ENCODE measurements at regions of chr2 and their contacts with region 1.

Region 1: GRCh38 chr2:98731041-98731893 is at the start of gene MGAT4A:
- DNase-seq: peak; percentile 76
- ATAC-seq: peak; percentile 87
- H3K4me3 Mint-ChIP-seq: peak within 1 kb of the TSS; percentile 83
- H3K27ac Mint-ChIP-seq: peak within 1 kb of the TSS; percentile 84
- H3K4me1 Mint-ChIP-seq: peaks cover 56% of the 10 kb centered on the region
- H3K27me3 Mint-ChIP-seq: no peaks in the 10 kb centered on the region
- CTCF ChIP-seq: no peak
- total RNA-seq, gene MGAT4A: 12.6 and 15.7 TPM in 2 replicates

Region 2: GRCh38 chr2:98649135-98649991 is 81.9 kb before region 1 on chr2:
- CTCF ChIA-PET with region 1: interaction called, 10 read pairs
- POLR2A ChIA-PET with region 1: no interaction called
- intact Hi-C with region 1: loop called (anchors 1 kb)
- DNase-seq: peak; percentile 46
- ATAC-seq: peak; percentile 99
- H3K4me3 Mint-ChIP-seq: no peak overlapping the region
- H3K27ac Mint-ChIP-seq: peak overlapping the region; percentile 18
- H3K4me1 Mint-ChIP-seq: peaks cover 19% of the 10 kb centered on the region
- H3K27me3 Mint-ChIP-seq: no peaks in the 10 kb centered on the region
- CTCF ChIP-seq: peak; percentile 99

Region 3: GRCh38 chr2:98702127-98702802 is 29.0 kb before region 1 on chr2:
- CTCF ChIA-PET with region 1: no interaction called
- POLR2A ChIA-PET with region 1: no interaction called
- intact Hi-C with region 1: no loop called
- DNase-seq: no peak
- ATAC-seq: no peak
- H3K4me3 Mint-ChIP-seq: no peak overlapping the region
- H3K27ac Mint-ChIP-seq: no peak overlapping the region
- H3K4me1 Mint-ChIP-seq: peaks cover 13% of the 10 kb centered on the region
- H3K27me3 Mint-ChIP-seq: no peaks in the 10 kb centered on the region
- CTCF ChIP-seq: no peak

Region 4: DNA sequence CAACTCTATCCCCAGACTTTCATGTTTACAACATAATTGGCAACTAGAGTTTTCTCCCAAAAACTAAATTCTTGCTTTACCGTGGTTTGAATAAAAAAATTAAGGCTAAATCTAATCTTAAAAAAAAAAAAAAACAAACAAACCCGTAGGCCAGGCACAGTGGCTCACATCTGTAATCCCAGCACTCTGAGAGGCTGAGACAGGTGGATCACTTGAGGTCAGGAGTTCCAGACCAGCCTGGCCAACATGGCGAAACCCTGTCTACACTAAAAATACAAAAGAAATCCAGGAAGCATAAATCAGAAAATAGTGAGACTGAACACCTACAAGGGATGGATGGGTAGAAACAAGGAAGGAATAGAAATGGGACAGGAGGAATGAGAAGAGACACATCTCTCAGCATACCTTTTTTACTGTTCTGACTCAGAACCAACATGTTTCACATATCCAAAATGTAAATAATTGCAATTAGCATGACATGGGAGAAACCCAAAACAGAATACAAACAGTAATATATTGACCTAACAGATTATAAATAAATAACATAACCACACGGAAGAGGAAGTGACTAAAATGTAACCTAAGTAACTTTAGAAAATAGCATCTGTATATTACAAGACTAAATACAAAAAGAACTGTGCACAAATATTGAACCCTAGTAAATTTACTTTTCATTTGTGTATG is 17.8 kb before region 1 on chr2:
- CTCF ChIA-PET with region 1: no interaction called
- POLR2A ChIA-PET with region 1: interaction called, 8 read pairs
- intact Hi-C with region 1: loop called (anchors 2 kb)
- DNase-seq: no peak
- ATAC-seq: peak; percentile 55
- H3K4me3 Mint-ChIP-seq: peak overlapping the region; percentile 54
- H3K27ac Mint-ChIP-seq: peak overlapping the region; percentile 78
- H3K4me1 Mint-ChIP-seq: peaks cover 76% of the 10 kb centered on the region
- H3K27me3 Mint-ChIP-seq: no peaks in the 10 kb centered on the region
- CTCF ChIP-seq: no peak

Region 5: DNA sequence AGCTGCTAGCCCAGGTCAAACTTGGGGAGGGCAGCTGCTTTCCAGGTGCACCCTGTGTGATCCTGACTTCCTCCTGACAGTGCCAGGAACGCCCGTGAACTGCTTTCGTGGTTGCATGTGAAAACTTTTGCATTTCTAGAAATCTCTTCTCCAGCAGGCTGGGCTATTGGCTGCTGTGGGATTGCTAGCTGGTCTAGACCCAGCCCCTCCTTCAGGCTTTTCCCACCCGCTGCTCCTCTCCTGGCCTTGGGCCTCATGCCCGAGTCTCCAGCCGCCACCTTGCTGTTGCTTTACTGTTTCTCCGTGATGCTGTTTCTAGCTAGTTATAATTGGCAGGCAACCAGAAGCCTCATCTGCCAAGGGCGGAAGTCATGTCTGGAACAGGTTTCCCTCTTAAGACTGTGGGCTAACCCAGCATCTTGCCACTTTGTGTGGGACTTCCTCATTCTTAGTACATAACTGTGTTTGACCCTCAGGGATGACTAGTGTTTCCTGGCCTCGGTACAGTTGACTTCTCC is 26.7 kb after region 1 on chr2:
- CTCF ChIA-PET with region 1: interaction called, 4 read pairs
- POLR2A ChIA-PET with region 1: interaction called, 15 read pairs
- intact Hi-C with region 1: loop called (anchors 2 kb)
- DNase-seq: no peak
- ATAC-seq: peak; percentile 93
- H3K4me3 Mint-ChIP-seq: peak overlapping the region; percentile 64
- H3K27ac Mint-ChIP-seq: peak overlapping the region; percentile 67
- H3K4me1 Mint-ChIP-seq: peaks cover 62% of the 10 kb centered on the region
- H3K27me3 Mint-ChIP-seq: no peaks in the 10 kb centered on the region
- CTCF ChIP-seq: no peak

Region 6: DNA sequence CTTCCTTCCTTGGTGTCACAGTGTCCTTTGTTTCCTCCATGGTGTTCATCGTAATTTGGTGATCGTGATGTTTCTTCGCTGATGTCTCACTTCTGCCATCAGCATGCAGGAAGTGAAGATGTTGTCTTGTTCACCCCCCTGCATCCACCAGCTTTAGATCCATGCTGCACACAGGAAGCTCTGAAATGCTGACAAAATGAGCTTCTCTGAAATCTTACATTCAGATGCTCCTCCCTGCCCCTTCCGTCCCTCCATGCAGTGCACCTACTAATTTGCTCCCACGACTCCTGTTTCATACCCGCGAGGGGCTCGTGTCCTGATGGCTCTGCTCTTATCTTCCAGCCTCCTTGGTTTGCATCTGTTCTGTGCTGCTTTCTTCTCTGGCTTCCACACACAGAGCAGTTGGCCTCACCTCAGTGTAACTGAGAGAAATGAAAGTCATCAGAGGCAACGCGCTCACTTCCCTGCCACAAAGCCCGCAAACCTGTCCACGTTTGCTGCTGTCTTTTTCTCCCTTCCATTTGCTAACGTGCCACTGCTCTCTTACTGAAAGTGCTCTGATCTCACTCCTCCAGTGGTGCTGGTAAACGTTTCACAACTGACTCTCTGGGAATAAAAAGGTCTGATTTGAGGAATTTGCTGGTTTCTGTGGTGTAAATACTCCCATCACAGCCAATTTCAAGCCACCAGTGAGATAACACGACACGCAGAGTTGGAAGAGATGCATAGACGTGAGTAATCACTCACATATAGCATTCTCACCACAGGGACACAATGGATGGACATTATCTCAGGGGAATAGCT is 40.7 kb after region 1 on chr2:
- CTCF ChIA-PET with region 1: no interaction called
- POLR2A ChIA-PET with region 1: interaction called, 11 read pairs
- intact Hi-C with region 1: no loop called
- DNase-seq: no peak
- ATAC-seq: peak; percentile 58
- H3K4me3 Mint-ChIP-seq: peak overlapping the region; percentile 81
- H3K27ac Mint-ChIP-seq: peak overlapping the region; percentile 80
- H3K4me1 Mint-ChIP-seq: peaks cover 39% of the 10 kb centered on the region
- H3K27me3 Mint-ChIP-seq: peaks cover 3% of the 10 kb centered on the region
- CTCF ChIP-seq: no peak

Region 7: GRCh38 chr2:98822301-98823164 is 91.3 kb after region 1 on chr2:
- CTCF ChIA-PET with region 1: interaction called, 5 read pairs
- POLR2A ChIA-PET with region 1: interaction called, 3 read pairs
- intact Hi-C with region 1: loop called (anchors 1 kb)
- DNase-seq: peak; percentile 41
- ATAC-seq: peak; percentile 80
- H3K4me3 Mint-ChIP-seq: peak overlapping the region; percentile 57
- H3K27ac Mint-ChIP-seq: no peak overlapping the region
- H3K4me1 Mint-ChIP-seq: peaks cover 16% of the 10 kb centered on the region
- H3K27me3 Mint-ChIP-seq: peaks cover 5% of the 10 kb centered on the region
- CTCF ChIP-seq: no peak

Region 8: DNA sequence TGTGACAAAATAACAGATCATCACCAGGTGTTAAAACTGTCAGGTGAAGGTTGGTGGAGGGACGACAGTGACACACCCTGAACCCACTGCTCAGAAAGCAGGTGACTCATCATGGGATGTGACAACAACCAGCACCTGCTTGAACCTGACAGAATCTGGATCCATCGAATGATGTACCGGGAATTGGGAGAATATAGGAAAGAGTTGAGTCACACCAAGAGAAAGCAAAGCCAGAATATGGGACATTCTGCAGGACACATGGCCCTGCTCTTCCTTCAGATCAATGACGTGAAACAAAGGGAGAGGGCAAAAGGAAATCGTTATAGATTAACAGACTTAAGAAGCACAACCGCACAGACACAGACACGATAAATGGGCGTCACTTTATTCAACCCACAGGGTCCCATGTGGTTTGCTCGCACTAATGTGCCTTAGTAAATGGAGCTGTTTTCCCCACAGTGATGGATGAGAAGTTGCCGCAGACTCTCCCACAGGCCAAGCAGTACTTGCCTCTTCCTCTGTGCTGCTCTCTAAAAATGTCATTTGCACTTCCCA is 104.6 kb after region 1 on chr2:
- CTCF ChIA-PET with region 1: interaction called, 4 read pairs
- POLR2A ChIA-PET with region 1: no interaction called
- intact Hi-C with region 1: loop called (anchors 1 kb)
- DNase-seq: no peak
- ATAC-seq: peak; percentile 18
- H3K4me3 Mint-ChIP-seq: no peak overlapping the region
- H3K27ac Mint-ChIP-seq: no peak overlapping the region
- H3K4me1 Mint-ChIP-seq: peaks cover 6% of the 10 kb centered on the region
- H3K27me3 Mint-ChIP-seq: no peaks in the 10 kb centered on the region
- CTCF ChIP-seq: no peak

Measured in activated B cell treated with CpG ODN at 0.5 μM for 24 hours (primary cell).